ENCODE measurements at regions of chr9 and their contacts with region 1.

Region 1: DNA sequence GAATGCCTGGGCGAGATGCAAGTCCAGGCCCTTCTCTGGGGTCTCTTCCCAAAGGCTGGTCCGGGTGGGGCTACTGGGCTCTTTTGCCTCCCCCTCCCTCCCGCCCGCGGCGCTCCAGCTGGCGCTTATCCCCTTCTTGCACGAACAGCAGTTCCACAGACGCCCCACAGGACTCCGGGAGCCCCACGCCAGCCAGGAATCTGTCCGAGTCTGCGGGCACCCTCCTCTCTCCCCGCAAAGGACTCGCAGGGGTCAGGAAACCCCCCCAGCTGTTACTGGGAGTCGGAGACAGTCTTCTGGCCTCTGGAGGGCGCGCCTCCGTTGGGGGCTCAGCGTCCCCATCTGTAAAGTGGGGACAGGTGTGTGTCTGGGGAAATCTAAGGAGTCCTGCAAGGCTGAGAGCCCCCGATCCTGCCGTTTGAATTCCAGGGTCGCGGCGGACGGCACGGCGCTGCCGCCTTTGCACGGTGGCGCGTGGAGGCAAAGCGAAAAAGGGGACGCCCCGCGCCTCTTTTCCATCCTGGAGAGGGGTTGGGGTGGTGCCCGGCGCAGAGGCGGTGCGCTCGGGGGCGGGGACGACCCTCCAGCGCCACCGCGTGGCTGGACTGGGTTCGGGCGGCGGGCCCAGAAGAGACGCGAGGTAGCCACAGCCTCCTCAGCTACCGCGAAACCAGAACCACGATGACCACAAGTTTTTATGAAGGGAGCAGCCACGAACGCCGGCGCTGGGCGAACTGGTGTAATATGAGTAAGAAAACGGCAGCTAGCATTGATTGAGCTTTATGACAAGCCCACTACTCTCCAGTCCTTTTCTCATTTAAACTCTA is 2.9 kb upstream of the CCIN start:
- DNase-seq: no peak
- ATAC-seq: peak; percentile 100
- H3K4me3 ChIP-seq: peak overlapping the region; percentile 55; the same call in 1 of the 2 replicates
- H3K27ac ChIP-seq: no peak overlapping the region
- H3K4me1 ChIP-seq: peaks cover 3% of the 10 kb centered on the region; the same call in 1 of the 2 replicates
- H3K27me3 ChIP-seq: no peaks in the 10 kb centered on the region; a peak in 2 of 4 replicates
- CTCF ChIP-seq: peak; percentile 82 to 98 (median 87)
- EP300 ChIP-seq: no peak
- POLR2A ChIP-seq: no peak
- RAD21 ChIP-seq: peak; percentile 81

Region 2: DNA sequence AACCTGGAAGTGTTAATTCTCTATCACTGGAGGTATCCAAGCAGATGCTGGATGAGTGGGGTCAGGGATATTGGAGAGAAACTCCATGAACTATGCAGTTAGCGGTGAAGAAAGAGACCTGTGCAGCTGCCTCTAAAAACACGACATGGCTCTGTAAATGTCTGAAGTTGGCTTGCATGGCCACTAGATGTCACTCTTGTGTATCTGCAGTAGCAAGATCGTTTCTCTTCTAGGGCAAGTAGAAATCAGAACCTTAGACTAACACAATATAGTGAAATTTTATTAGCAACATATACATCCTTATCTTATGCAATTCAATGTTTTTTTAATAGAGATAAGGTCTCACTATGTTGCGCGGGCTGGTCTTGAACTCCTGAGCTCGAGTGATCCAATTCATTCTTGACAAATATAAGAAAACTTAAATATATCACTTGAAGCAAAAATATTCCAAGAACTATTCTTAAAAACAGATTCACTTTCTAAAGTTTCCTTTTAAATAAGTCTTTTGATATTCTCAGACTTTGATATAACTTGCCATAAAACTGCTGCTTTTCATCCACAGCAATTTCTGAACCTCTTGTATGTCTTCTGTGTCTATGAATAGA is 211.3 kb before region 1 on chr9:
- CTCF ChIA-PET with region 1: interaction called, 3 read pairs
- POLR2A ChIA-PET with region 1: no interaction called
- RAD21 ChIA-PET with region 1: interaction called, 3 read pairs
- SMC1A ChIA-PET with region 1: no interaction called
- in situ Hi-C with region 1: no loop called
- intact Hi-C with region 1: loop called (anchors 2 kb)
- DNase-seq: no peak
- ATAC-seq: peak; percentile 88
- H3K4me3 ChIP-seq: no peak overlapping the region
- H3K27ac ChIP-seq: no peak overlapping the region
- H3K4me1 ChIP-seq: no peaks in the 10 kb centered on the region
- H3K27me3 ChIP-seq: no peaks in the 10 kb centered on the region; a peak in 1 of 4 replicates
- CTCF ChIP-seq: peak; percentile 83 to 87 (median 85)
- EP300 ChIP-seq: no peak
- POLR2A ChIP-seq: no peak
- RAD21 ChIP-seq: peak; percentile 91

Region 3: GRCh38 chr9:36008774-36009300 is 157.5 kb before region 1 on chr9:
- CTCF ChIA-PET with region 1: interaction called, 12 read pairs
- POLR2A ChIA-PET with region 1: no interaction called
- RAD21 ChIA-PET with region 1: no interaction called
- SMC1A ChIA-PET with region 1: interaction called, 3 read pairs
- in situ Hi-C with region 1: no loop called
- intact Hi-C with region 1: no loop called
- DNase-seq: no peak
- ATAC-seq: peak; percentile 90
- H3K4me3 ChIP-seq: no peak overlapping the region
- H3K27ac ChIP-seq: no peak overlapping the region
- H3K4me1 ChIP-seq: peaks cover 22% of the 10 kb centered on the region
- H3K27me3 ChIP-seq: peaks cover 0 to 10% of the 10 kb centered on the region in 2 experiments; a peak in 3 of 4 replicates
- CTCF ChIP-seq: peak; percentile 70 to 83 (median 82)
- EP300 ChIP-seq: no peak
- POLR2A ChIP-seq: no peak
- RAD21 ChIP-seq: peak; percentile 54

Region 4: GRCh38 chr9:36036780-36037548 is 129.3 kb before region 1 on chr9 and contains the start of gene RECK:
- CTCF ChIA-PET with region 1: no interaction called
- POLR2A ChIA-PET with region 1: no interaction called
- RAD21 ChIA-PET with region 1: no interaction called
- SMC1A ChIA-PET with region 1: no interaction called
- in situ Hi-C with region 1: no loop called
- intact Hi-C with region 1: loop called (anchors 10 kb)
- DNase-seq: no peak
- ATAC-seq: peak; percentile 99
- H3K4me3 ChIP-seq: peak within 1 kb of the TSS; percentile 71
- H3K27ac ChIP-seq: no peak within 1 kb of the TSS
- H3K4me1 ChIP-seq: no peaks in the 10 kb centered on the region; the same call in 1 of the 2 replicates
- H3K27me3 ChIP-seq: peaks cover 0 to 2% of the 10 kb centered on the region in 2 experiments; a peak in 1 of 4 replicates
- CTCF ChIP-seq: no peak
- EP300 ChIP-seq: no peak
- POLR2A ChIP-seq: peak; percentile 70
- RAD21 ChIP-seq: no peak
- polyA plus RNA-seq, gene RECK: 0.02 to 0.07 TPM

Region 5: DNA sequence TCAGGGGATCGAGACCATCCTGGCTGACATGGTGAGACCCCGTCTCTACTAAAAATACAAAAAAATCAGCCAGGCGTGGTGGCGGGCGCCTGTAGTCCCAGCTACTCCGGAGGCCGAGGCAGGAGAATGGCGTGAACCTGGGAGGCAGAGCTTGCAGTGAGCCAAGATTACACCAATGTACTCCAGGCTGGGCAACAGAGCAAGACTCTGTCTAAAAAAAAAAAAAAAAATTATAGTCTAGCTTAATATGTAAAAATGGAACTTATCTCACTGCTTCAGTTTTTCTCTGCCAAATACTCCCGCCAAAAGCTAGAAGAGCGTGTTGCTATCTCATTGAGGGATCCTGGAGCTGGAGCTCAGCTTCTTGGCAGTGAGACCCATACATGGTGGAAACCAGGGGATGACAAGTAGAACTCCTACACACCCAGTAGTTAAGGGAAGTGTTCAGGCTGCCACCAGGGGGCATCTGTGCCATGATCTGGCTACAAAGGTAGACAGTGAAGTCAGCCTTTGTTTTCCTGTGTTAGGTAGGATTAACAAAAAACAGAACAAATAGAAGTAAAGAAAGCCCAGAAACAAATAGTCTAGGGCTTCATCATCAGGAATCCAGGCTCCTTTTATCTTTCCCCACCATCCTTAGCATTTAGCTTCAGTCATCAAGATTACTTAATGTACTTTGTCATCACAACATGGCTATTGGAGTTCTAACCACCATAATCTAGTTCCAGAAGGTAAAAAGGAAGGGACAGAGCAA is 63.4 kb before region 1 on chr9:
- CTCF ChIA-PET with region 1: interaction called, 258 read pairs
- POLR2A ChIA-PET with region 1: interaction called, 3 read pairs
- RAD21 ChIA-PET with region 1: interaction called, 105 read pairs
- SMC1A ChIA-PET with region 1: interaction called, 134 read pairs
- in situ Hi-C with region 1: loop called (anchors 5 kb)
- intact Hi-C with region 1: loop called (anchors 1 kb)
- DNase-seq: peak; percentile 36
- ATAC-seq: peak; percentile 100
- H3K4me3 ChIP-seq: no peak overlapping the region
- H3K27ac ChIP-seq: no peak overlapping the region
- H3K4me1 ChIP-seq: no peaks in the 10 kb centered on the region
- H3K27me3 ChIP-seq: no peaks in the 10 kb centered on the region; a peak in 1 of 4 replicates
- CTCF ChIP-seq: peak; percentile 89 to 92 (median 92)
- EP300 ChIP-seq: no peak
- POLR2A ChIP-seq: no peak
- RAD21 ChIP-seq: peak; percentile 92

Region 6: DNA sequence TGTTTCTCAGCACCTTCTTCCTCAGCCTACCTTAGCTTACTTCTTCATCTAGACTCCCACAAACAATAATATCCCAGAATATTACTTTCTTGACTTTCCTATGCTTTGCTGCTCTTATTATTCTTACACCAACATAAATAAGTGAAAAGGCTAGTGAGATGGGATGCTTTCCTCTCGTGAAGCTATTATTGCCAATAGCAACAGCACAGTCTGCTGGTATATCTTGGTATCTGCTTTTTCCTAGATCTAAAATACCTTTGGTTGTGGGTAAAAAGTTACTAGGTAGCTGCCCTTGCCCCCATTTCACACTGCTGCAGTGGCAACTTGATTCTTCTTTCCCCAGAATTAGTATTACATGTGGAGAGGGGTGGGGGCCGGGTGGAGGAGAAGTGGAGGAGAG is 55.9 kb before region 1 on chr9:
- CTCF ChIA-PET with region 1: interaction called, 258 read pairs
- POLR2A ChIA-PET with region 1: no interaction called
- RAD21 ChIA-PET with region 1: interaction called, 105 read pairs
- SMC1A ChIA-PET with region 1: interaction called, 134 read pairs
- in situ Hi-C with region 1: no loop called
- intact Hi-C with region 1: no loop called
- DNase-seq: no peak
- ATAC-seq: no peak
- H3K4me3 ChIP-seq: no peak overlapping the region
- H3K27ac ChIP-seq: no peak overlapping the region
- H3K4me1 ChIP-seq: no peaks in the 10 kb centered on the region
- H3K27me3 ChIP-seq: no peaks in the 10 kb centered on the region
- CTCF ChIP-seq: peak in 1 of 3 experiments; percentile 11; a peak in 2 of 6 replicates
- EP300 ChIP-seq: no peak
- POLR2A ChIP-seq: no peak
- RAD21 ChIP-seq: 0 out of 2 replicates have a peak, but pooled peaks have one; percentile 13

Region 7: GRCh38 chr9:36156116-36156515 is 10.2 kb before region 1 on chr9:
- CTCF ChIA-PET with region 1: interaction called, 13 read pairs
- POLR2A ChIA-PET with region 1: no interaction called
- RAD21 ChIA-PET with region 1: interaction called, 5 read pairs
- SMC1A ChIA-PET with region 1: no interaction called
- in situ Hi-C with region 1: no loop called
- intact Hi-C with region 1: no loop called
- DNase-seq: no peak
- ATAC-seq: no peak
- H3K4me3 ChIP-seq: no peak overlapping the region
- H3K27ac ChIP-seq: no peak overlapping the region
- H3K4me1 ChIP-seq: peaks cover 25% of the 10 kb centered on the region
- H3K27me3 ChIP-seq: no peaks in the 10 kb centered on the region
- CTCF ChIP-seq: no peak
- EP300 ChIP-seq: no peak
- POLR2A ChIP-seq: no peak
- RAD21 ChIP-seq: no peak

Region 8: GRCh38 chr9:36364577-36364976 is 198.3 kb after region 1 on chr9:
- CTCF ChIA-PET with region 1: no interaction called
- POLR2A ChIA-PET with region 1: no interaction called
- RAD21 ChIA-PET with region 1: no interaction called
- SMC1A ChIA-PET with region 1: no interaction called
- in situ Hi-C with region 1: no loop called
- intact Hi-C with region 1: no loop called
- DNase-seq: no peak
- ATAC-seq: no peak
- H3K4me3 ChIP-seq: no peak overlapping the region
- H3K27ac ChIP-seq: no peak overlapping the region
- H3K4me1 ChIP-seq: no peaks in the 10 kb centered on the region
- H3K27me3 ChIP-seq: no peaks in the 10 kb centered on the region
- CTCF ChIP-seq: no peak
- EP300 ChIP-seq: no peak
- POLR2A ChIP-seq: no peak
- RAD21 ChIP-seq: no peak